Right ventricle myocardium inferior (tissue), 1 donor: ENCODE measurements at regions of chr16 and their contacts with region 1.

Region 1: DNA sequence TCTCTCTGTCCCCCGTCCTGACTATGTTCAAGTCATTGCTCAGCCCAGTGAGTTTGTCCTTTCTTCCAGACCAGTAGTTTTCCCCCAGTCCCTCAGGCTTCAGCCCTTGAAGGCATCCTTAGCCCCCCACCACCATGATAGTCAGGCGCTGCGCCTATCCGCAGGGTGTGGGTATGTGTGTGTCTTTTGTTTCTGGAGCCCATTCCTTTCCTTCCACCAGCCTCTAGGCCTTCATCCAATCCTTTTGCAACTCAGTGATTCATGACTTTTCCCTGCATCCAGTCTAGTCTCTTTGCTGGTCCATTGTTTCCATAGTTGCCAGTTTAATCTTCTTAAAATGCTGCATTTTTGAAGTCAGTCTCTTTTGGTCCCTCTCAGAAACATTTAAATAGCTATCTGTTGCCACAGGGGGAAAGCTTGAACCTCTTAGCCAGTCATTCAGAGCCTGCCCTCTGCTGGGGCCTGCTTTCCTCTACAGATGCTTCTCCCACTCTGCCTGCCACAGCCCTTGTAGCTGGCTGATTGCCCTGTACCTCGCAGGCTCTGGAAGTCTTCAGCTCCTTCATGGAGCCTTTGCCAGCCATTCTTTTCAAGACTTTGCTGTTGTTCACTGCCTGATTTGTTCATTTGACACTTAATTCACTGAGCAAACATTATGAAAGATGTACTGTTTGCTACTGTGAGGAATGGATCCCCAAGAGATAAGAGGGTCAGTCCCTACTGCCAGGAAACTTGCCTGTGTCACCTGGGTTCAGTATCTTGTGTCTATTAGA is 55.9 kb upstream of the ADCY7 start:
- DNase-seq: peak; percentile 89
- ATAC-seq: peak; percentile 88

Region 2: DNA sequence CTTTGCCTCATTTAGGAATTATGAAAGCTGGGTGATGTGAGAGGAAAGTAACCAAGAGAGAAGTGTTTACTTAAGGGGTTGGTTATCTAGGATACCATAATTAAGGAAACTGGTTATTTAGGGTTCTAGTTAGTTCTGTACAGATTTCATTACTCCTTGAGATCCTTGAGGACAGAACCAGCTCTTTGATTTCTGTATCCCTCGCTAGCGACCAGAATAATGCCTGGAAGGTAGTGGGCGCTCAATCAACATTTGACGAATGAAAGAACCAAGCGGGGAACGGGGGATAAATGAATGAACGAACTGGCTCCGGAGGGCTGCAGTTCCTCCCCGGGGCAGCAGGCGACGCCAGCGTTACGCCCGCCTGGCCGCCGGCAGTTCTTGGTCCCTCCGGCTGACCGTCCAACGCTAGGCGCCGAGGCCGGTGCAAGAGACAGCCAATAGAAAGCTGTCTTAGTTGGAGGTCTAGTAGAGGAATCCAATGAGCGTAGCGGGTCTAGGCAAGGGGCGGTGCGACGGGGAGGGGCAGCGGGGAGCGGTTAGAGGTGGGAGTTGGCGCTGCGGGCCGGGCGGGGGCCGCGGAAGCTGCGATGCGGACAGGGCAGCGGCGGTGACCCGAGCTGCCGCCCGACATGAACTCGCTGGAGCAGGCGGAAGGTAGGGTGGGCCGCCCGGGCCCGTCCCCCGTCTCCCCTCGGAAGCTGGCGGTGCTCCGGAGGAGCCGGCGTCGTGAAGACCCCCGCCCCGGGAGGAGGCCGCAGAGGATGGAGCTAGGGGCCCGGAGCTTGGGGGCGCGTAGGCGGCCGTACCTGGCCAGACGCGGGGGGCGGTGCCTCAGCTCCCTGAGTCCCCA is 185.5 kb before region 1 on chr16 and contains the start of gene CNEP1R1:
- intact Hi-C with region 1: loop called (anchors 1 kb)
- DNase-seq: peak; percentile 96
- ATAC-seq: peak; percentile 100
- total RNA-seq, gene CNEP1R1: 18.5 TPM

Region 3: DNA sequence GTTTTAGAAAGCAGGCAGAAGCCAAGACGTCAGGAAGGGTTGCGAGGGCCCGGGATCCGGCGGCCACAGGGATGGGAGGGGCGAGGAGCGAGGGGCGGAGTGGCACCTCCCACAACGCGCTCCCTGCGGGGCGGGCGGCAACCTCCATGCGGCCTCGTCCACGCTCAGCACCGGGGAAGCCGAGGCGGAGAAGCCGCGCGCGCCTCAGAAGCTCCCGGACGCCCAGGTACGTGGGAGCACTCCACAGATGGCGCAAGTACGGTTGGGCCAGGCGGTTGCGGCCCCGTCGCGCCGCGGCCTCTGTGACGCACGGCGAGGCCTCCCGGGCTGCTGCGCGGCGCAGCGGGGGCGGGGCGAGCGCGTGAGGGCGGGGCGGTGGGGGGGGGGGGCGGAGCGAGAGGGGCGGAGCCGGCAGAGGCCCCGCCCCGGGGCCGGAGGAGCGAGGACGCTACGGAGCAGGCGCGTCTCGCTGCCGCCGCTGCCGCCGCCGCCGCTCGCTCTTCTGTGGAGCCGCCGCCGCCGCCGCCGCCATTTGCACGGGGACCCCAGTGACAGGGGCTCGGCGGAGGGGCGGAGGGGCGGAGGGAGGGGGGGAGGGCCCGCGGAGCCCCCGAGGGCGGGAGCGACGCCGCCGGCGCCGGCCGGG is 57.5 kb before region 1 on chr16 and contains the start of gene TENT4B:
- intact Hi-C with region 1: loop called (anchors 2 kb)
- DNase-seq: peak; percentile 93
- ATAC-seq: peak; percentile 95
- total RNA-seq, gene TENT4B: 7.8 TPM

Region 4: GRCh38 chr16:50195276-50195675 is 15.2 kb before region 1 on chr16:
- intact Hi-C with region 1: no loop called
- DNase-seq: no peak
- ATAC-seq: no peak

Region 5: GRCh38 chr16:50354629-50355456 is 144.4 kb after region 1 on chr16:
- intact Hi-C with region 1: loop called (anchors 5 kb)
- DNase-seq: no peak
- ATAC-seq: no peak

Region 6: GRCh38 chr16:50419116-50419515 is 208.7 kb after region 1 on chr16:
- intact Hi-C with region 1: no loop called
- DNase-seq: no peak
- ATAC-seq: no peak

Region 7: GRCh38 chr16:50665128-50665878 is 454.9 kb after region 1 on chr16:
- intact Hi-C with region 1: loop called (anchors 10 kb)
- DNase-seq: peak; percentile 88
- ATAC-seq: peak; percentile 86

Region 8: GRCh38 chr16:50806099-50807062 is 595.9 kb after region 1 on chr16:
- intact Hi-C with region 1: loop called (anchors 10 kb)
- DNase-seq: peak; percentile 87
- ATAC-seq: peak; percentile 93